PC-9 (cell line): ENCODE measurements at regions of chr7 and their contacts with region 1.

Region 1: GRCh38 chr7:44200647-44201461 is at the start of gene YKT6:
- DNase-seq: peak; percentile 97 to 98
- H3K4me3 ChIP-seq: peak within 1 kb of the TSS; percentile 97
- H3K27ac ChIP-seq: 0 out of 2 replicates have a peak within 1 kb of the TSS, but pooled peaks have one; percentile 10
- H3K4me1 ChIP-seq: peaks cover 9% of the 10 kb centered on the region
- H3K27me3 ChIP-seq: no peaks in the 10 kb centered on the region
- CTCF ChIP-seq: peak; percentile 68; the same call in 1 of the 2 replicates
- total RNA-seq, gene YKT6: 109 and 142 TPM in 2 replicates

Region 2: GRCh38 chr7:43625453-43625852 is 575.4 kb before region 1 on chr7:
- CTCF ChIA-PET with region 1: no interaction called
- POLR2A ChIA-PET with region 1: no interaction called
- intact Hi-C with region 1: no loop called
- DNase-seq: no peak
- H3K4me3 ChIP-seq: no peak overlapping the region
- H3K27ac ChIP-seq: no peak overlapping the region; the same call in 1 of the 2 replicates
- H3K4me1 ChIP-seq: no peaks in the 10 kb centered on the region
- H3K27me3 ChIP-seq: no peaks in the 10 kb centered on the region
- CTCF ChIP-seq: no peak

Region 3: DNA sequence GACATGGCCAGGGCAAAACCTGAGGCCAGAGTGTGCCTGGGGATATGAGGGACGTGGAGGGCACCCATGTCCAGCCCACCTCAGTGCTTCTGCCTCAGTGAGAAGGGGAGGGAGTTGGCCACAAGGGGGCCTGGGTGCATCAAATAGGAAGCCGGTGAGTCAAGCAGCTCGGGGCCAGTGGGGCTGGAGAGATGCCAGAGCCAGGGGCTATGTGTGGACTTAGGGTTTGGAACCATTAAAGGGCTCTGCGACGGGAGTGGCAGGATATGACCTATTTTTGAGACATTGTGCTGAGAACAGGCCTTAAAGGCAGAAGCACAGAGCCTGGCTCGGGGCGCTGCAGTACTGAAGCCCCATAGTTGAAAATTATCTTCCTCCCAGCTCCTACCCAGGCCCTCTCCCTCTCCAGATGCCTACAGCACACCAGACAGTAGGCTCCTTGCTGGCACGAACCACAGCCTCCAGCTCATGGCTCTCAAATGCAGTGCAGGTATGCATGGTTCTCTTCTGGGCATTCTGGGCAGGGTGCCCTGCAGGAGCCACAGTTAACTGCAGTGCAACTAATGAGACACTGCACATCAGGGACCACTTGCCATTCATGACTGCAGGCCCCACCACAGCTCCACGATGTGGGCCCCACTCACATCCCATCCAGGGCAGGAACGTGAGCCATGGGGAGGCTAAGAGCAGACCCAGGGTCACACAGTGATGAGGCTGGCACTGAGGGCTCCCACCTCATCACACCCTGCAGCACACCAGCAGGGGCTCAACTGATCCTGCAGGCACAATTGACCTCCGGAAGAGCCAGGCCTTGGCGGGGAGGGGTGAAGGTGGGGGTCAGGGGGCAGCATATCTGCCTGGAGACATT is 128.3 kb before region 1 on chr7:
- CTCF ChIA-PET with region 1: no interaction called
- POLR2A ChIA-PET with region 1: no interaction called
- intact Hi-C with region 1: loop called (anchors 1 kb)
- DNase-seq: peak; percentile 94 to 96
- H3K4me3 ChIP-seq: peak overlapping the region; percentile 30; the same call in 1 of the 2 replicates
- H3K27ac ChIP-seq: peak overlapping the region; percentile 27
- H3K4me1 ChIP-seq: peaks cover 47% of the 10 kb centered on the region
- H3K27me3 ChIP-seq: no peaks in the 10 kb centered on the region
- CTCF ChIP-seq: peak; percentile 93

Region 4: GRCh38 chr7:44123190-44124003 is 77.5 kb before region 1 on chr7 and contains the start of gene POLD2:
- CTCF ChIA-PET with region 1: no interaction called
- POLR2A ChIA-PET with region 1: no interaction called
- intact Hi-C with region 1: loop called (anchors 1 kb)
- DNase-seq: peak; percentile 94 to 100
- H3K4me3 ChIP-seq: peak within 1 kb of the TSS; percentile 65
- H3K27ac ChIP-seq: peak within 1 kb of the TSS; percentile 1; the same call in 1 of the 2 replicates
- H3K4me1 ChIP-seq: peaks cover 11% of the 10 kb centered on the region
- H3K27me3 ChIP-seq: no peaks in the 10 kb centered on the region
- CTCF ChIP-seq: no peak
- total RNA-seq, gene POLD2: 217 and 249 TPM in 2 replicates

Region 5: GRCh38 chr7:44131173-44132029 is 69.5 kb before region 1 on chr7:
- CTCF ChIA-PET with region 1: interaction called, 14 read pairs
- POLR2A ChIA-PET with region 1: interaction called, 4 read pairs
- intact Hi-C with region 1: loop called (anchors 1 kb)
- DNase-seq: peak; percentile 51 to 73
- H3K4me3 ChIP-seq: no peak overlapping the region
- H3K27ac ChIP-seq: no peak overlapping the region
- H3K4me1 ChIP-seq: peaks cover 5% of the 10 kb centered on the region
- H3K27me3 ChIP-seq: no peaks in the 10 kb centered on the region
- CTCF ChIP-seq: peak; percentile 77

Region 6: GRCh38 chr7:44163591-44163990 is 37.3 kb before region 1 on chr7:
- CTCF ChIA-PET with region 1: no interaction called
- POLR2A ChIA-PET with region 1: interaction called, 3 read pairs
- intact Hi-C with region 1: loop called (anchors 1 kb)
- DNase-seq: peak; percentile 86 to 94
- H3K4me3 ChIP-seq: no peak overlapping the region
- H3K27ac ChIP-seq: 0 out of 2 replicates have a peak overlapping the region, but pooled peaks have one; percentile 30
- H3K4me1 ChIP-seq: peaks cover 25% of the 10 kb centered on the region
- H3K27me3 ChIP-seq: no peaks in the 10 kb centered on the region
- CTCF ChIP-seq: no peak

Region 7: DNA sequence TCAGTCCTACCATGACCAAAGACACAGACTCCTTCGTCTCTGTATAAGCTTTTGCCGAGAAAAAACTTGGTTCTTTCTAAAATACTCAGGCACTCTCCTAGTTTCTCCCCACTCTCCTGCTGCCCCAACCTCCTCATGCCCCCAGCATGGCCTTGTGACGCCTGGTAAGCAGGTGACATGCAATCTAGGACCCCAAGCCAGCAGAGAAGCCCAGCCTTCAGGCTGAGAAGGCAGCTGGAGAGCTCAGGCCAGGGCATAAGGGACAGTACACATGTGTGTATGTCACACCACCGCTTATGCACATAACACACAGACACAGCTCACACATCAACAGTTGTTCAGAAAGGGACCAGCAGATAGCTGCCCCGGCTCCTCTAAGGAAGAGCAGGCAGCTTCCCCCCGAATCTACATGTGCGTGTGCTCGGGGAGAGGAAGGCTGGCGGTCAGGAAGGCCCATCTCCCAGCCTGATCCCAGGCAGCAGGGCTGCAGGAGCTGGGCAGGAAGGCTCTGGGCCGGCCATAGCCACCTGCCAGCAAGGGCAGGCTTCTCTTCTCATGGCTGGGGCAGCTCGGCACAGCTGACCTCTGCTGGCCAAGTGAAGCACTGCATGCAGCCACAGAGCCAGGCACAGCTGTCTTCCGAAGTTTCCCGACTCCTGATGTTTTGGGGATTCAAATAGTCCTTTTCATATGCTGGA is 364.4 kb after region 1 on chr7:
- CTCF ChIA-PET with region 1: interaction called, 19 read pairs
- POLR2A ChIA-PET with region 1: no interaction called
- intact Hi-C with region 1: no loop called
- DNase-seq: peak in 1 of 2 experiments; percentile 78
- H3K4me3 ChIP-seq: no peak overlapping the region
- H3K27ac ChIP-seq: no peak overlapping the region
- H3K4me1 ChIP-seq: peaks cover 16% of the 10 kb centered on the region
- H3K27me3 ChIP-seq: no peaks in the 10 kb centered on the region
- CTCF ChIP-seq: peak; percentile 100